AG04450 (cell line): ENCODE measurements at regions of chr5 and their contacts with region 1.

Region 1: DNA sequence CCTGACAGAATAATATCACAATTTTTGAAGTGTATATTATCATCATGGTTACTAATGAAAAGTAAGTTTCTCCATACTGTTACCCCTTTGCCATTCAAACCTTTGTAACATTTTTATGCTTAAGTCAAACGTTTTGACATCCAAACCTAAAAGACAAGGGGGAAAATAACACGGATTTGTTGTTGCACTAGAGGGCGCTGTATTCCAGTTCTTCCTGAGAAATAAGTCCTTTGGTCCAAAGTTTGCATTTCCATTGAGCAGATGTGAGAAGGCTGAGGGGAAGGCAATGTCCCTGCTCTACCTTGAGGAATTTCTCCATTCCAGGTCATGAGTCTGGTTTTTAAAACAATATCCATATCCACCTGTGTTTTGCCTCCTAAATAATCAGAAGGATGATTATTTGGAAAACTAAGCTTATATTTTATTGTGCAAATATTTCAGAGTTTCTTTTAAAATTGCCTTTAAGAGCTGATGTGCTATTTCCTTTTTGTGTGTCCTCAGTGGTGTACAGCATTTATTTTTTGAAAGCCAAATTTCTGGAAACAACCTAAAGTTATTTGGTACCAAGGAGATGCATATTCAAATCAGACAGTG is 9.7 kb downstream of the LECT2 start:
- DNase-seq: peak; percentile 74
- H3K4me3 ChIP-seq: no peak overlapping the region
- H3K27ac ChIP-seq: no peak overlapping the region
- H3K27me3 ChIP-seq: no peaks in the 10 kb centered on the region
- CTCF ChIP-seq: peak; percentile 79

Region 2: DNA sequence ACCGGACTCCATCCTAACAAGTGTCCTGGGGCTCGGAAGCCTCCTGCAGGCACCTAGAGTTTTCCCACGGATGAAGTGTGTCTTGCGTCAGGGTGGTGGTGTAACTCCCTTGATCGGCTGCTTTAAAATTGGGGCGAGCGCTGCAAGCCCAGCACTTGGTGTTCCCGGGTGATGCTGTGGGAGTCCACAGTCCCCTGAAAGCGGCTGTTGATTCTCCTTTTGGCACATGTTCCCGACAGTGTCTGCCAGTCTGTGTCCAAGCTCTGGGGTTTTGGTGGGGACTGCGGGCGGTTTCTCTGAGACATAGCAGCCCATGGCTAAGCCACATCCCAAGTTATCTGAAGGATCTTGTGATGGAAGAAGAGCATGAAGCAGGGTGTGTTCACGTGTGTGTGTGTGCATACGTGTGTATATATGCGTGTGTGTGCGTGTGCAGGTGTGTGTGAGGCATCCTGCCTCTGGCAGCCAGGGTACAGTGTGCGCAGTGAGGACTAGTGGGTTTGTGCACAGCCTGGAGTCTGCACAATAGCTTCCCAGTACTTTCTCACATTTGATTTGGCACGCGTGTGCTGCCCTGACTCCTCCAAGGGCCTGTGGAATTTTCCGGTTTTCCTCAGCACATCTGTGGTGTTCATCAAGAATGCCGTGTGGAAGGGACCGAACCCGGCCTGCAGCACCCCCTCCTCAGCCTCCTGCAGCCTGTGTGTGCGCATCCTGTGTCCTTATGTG is 93.7 kb before region 1 on chr5:
- CTCF ChIA-PET with region 1: no interaction called
- POLR2A ChIA-PET with region 1: no interaction called
- DNase-seq: no peak
- H3K4me3 ChIP-seq: no peak overlapping the region
- H3K27ac ChIP-seq: no peak overlapping the region
- H3K27me3 ChIP-seq: no peaks in the 10 kb centered on the region
- CTCF ChIP-seq: no peak

Region 3: DNA sequence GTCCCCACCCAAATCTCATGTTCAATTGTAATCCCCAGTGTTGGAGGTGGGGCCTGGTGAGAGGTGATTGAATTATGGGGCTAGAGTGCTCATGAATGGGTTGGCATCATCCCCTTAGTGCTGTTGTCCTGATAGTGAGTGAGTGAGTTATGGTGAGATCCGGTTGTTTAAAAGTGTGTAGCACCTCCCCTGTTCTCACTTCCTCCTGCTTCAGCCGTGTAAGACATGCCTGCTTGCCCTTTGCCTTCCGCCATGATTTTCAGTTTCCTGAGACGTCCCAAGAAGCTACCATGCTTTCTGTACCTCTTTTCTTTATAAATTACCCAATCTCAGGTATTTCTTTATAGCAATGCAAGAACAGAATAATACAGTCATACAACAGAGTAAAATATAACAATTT is 10.5 kb after region 1 on chr5:
- CTCF ChIA-PET with region 1: interaction called, 21 read pairs
- POLR2A ChIA-PET with region 1: no interaction called
- DNase-seq: no peak
- H3K4me3 ChIP-seq: no peak overlapping the region
- H3K27ac ChIP-seq: no peak overlapping the region
- H3K27me3 ChIP-seq: no peaks in the 10 kb centered on the region
- CTCF ChIP-seq: no peak

Region 4: GRCh38 chr5:135979510-135979909 is 34.4 kb after region 1 on chr5:
- CTCF ChIA-PET with region 1: interaction called, 10 read pairs
- POLR2A ChIA-PET with region 1: no interaction called
- DNase-seq: peak; percentile 83
- H3K4me3 ChIP-seq: no peak overlapping the region
- H3K27ac ChIP-seq: peak overlapping the region; percentile 41
- H3K27me3 ChIP-seq: no peaks in the 10 kb centered on the region
- CTCF ChIP-seq: no peak

Region 5: GRCh38 chr5:136062366-136063274 is 117.6 kb after region 1 on chr5:
- CTCF ChIA-PET with region 1: interaction called, 53 read pairs
- POLR2A ChIA-PET with region 1: no interaction called
- DNase-seq: no peak
- H3K4me3 ChIP-seq: no peak overlapping the region
- H3K27ac ChIP-seq: peak overlapping the region; percentile 24
- H3K27me3 ChIP-seq: no peaks in the 10 kb centered on the region
- CTCF ChIP-seq: peak; percentile 44

Region 6: GRCh38 chr5:136080483-136081216 is 135.6 kb after region 1 on chr5:
- CTCF ChIA-PET with region 1: interaction called, 82 read pairs
- POLR2A ChIA-PET with region 1: no interaction called
- DNase-seq: peak; percentile 91
- H3K4me3 ChIP-seq: peak overlapping the region; percentile 62
- H3K27ac ChIP-seq: peak overlapping the region; percentile 84
- H3K27me3 ChIP-seq: no peaks in the 10 kb centered on the region
- CTCF ChIP-seq: no peak

Region 7: GRCh38 chr5:136315667-136316066 is 370.6 kb after region 1 on chr5:
- CTCF ChIA-PET with region 1: no interaction called
- POLR2A ChIA-PET with region 1: no interaction called
- DNase-seq: no peak
- H3K4me3 ChIP-seq: no peak overlapping the region
- H3K27ac ChIP-seq: no peak overlapping the region
- H3K27me3 ChIP-seq: no peaks in the 10 kb centered on the region
- CTCF ChIP-seq: no peak